Activated B cell treated with CpG ODN at 0.5 μM for 24 hours (primary cell): ENCODE measurements at regions of chr1 and their contacts with region 1.

Region 1: GRCh38 chr1:174217787-174218574 is 58.7 kb downstream of the RABGAP1L start:
- DNase-seq: no peak
- ATAC-seq: peak; percentile 81
- H3K4me3 Mint-ChIP-seq: no peak overlapping the region
- H3K27ac Mint-ChIP-seq: no peak overlapping the region
- H3K4me1 Mint-ChIP-seq: peaks cover 28% of the 10 kb centered on the region
- H3K27me3 Mint-ChIP-seq: no peaks in the 10 kb centered on the region
- CTCF ChIP-seq: peak; percentile 23

Region 2: GRCh38 chr1:173986951-173987350 is 231.0 kb before region 1 on chr1:
- CTCF ChIA-PET with region 1: interaction called, 4 read pairs
- POLR2A ChIA-PET with region 1: interaction called, 5 read pairs
- intact Hi-C with region 1: loop called (anchors 5 kb)
- DNase-seq: no peak
- ATAC-seq: no peak
- H3K4me3 Mint-ChIP-seq: no peak overlapping the region
- H3K27ac Mint-ChIP-seq: no peak overlapping the region
- H3K4me1 Mint-ChIP-seq: no peaks in the 10 kb centered on the region
- H3K27me3 Mint-ChIP-seq: no peaks in the 10 kb centered on the region
- CTCF ChIP-seq: no peak

Region 3: GRCh38 chr1:174013864-174014418 is 204.0 kb before region 1 on chr1:
- CTCF ChIA-PET with region 1: no interaction called
- POLR2A ChIA-PET with region 1: interaction called, 16 read pairs
- intact Hi-C with region 1: no loop called
- DNase-seq: no peak
- ATAC-seq: no peak
- H3K4me3 Mint-ChIP-seq: no peak overlapping the region
- H3K27ac Mint-ChIP-seq: no peak overlapping the region
- H3K4me1 Mint-ChIP-seq: peaks cover 50% of the 10 kb centered on the region
- H3K27me3 Mint-ChIP-seq: no peaks in the 10 kb centered on the region
- CTCF ChIP-seq: no peak

Region 4: GRCh38 chr1:174097426-174097825 is 120.6 kb before region 1 on chr1:
- CTCF ChIA-PET with region 1: interaction called, 16 read pairs
- POLR2A ChIA-PET with region 1: no interaction called
- intact Hi-C with region 1: loop called (anchors 1 kb)
- DNase-seq: no peak
- ATAC-seq: no peak
- H3K4me3 Mint-ChIP-seq: no peak overlapping the region
- H3K27ac Mint-ChIP-seq: no peak overlapping the region
- H3K4me1 Mint-ChIP-seq: no peaks in the 10 kb centered on the region
- H3K27me3 Mint-ChIP-seq: no peaks in the 10 kb centered on the region
- CTCF ChIP-seq: no peak

Region 5: GRCh38 chr1:174159252-174160108 is 58.5 kb before region 1 on chr1 and contains the start of gene RABGAP1L:
- CTCF ChIA-PET with region 1: interaction called, 4 read pairs
- POLR2A ChIA-PET with region 1: interaction called, 7 read pairs
- intact Hi-C with region 1: loop called (anchors 1 kb)
- DNase-seq: peak; percentile 88
- ATAC-seq: peak; percentile 84
- H3K4me3 Mint-ChIP-seq: peak within 1 kb of the TSS; percentile 96
- H3K27ac Mint-ChIP-seq: peak within 1 kb of the TSS; percentile 99
- H3K4me1 Mint-ChIP-seq: peaks cover 72% of the 10 kb centered on the region
- H3K27me3 Mint-ChIP-seq: no peaks in the 10 kb centered on the region
- CTCF ChIP-seq: no peak
- total RNA-seq, gene RABGAP1L: 103 and 126 TPM in 2 replicates

Region 6: DNA sequence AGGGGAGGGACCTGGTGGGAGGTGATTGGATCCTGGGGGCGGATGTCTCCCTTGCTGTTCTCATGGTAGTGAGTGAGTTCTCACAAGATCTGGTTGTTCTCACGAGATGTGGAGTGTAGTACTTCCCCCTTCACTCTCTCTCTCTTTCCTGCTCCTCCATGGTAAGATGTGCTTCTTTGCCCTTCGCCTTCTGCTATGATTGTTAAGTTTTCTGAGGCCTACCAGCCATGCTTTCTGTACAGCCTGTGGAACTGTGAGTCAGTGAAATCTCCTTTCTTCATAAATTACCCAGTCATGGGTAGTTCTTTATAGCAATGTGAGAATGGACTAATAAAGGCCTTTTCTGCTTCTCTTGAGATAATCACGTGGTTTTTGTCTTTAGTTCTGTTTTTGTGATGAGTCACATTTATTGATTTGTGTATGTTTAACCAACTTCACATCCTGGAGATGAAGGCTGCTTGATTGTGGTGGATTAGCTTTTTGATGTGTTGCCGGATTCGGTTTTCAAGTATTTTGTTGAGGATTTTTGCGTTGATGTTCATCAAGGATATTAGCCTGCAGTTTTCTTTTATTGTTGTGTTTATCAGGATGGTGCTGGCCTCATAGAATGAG is 13.2 kb before region 1 on chr1:
- CTCF ChIA-PET with region 1: interaction called, 14 read pairs
- POLR2A ChIA-PET with region 1: no interaction called
- intact Hi-C with region 1: no loop called
- DNase-seq: no peak
- ATAC-seq: peak; percentile 60
- H3K4me3 Mint-ChIP-seq: peak overlapping the region; percentile 59
- H3K27ac Mint-ChIP-seq: peak overlapping the region; percentile 72
- H3K4me1 Mint-ChIP-seq: peaks cover 64% of the 10 kb centered on the region
- H3K27me3 Mint-ChIP-seq: no peaks in the 10 kb centered on the region
- CTCF ChIP-seq: no peak